PC-3 (cell line): ENCODE measurements at regions of chr19 and their contacts with region 1.

Region 1: DNA sequence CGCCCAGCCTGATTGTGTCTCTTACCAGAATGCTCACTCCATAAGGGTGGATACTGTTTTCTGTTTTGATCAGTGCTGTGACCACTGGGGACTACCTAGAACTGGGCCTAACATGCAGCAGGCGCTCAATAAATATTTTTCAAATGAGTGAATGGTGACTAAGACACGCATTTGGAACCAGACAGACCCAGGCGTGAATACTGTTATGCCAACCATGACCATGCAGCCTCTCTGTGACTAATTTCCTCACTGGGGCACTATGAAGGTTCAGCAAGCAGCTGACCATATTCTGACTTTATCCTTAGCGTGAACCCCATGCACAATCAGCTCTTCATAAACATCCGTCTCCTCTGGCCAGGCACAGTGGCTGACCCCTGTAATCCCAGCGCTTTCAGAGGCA is 13.0 kb upstream of the SPC24 start:
- DNase-seq: peak; percentile 99
- ATAC-seq: peak; percentile 97
- H3K4me3 ChIP-seq: no peak overlapping the region
- H3K27ac ChIP-seq: peak overlapping the region; percentile 76
- H3K4me1 ChIP-seq: peaks cover 18% of the 10 kb centered on the region
- H3K27me3 ChIP-seq: no peaks in the 10 kb centered on the region
- CTCF ChIP-seq: no peak

Region 2: GRCh38 chr19:11197264-11198174 is 29.0 kb after region 1 on chr19 and contains the start of gene KANK2:
- CTCF ChIA-PET with region 1: no interaction called
- POLR2A ChIA-PET with region 1: no interaction called
- intact Hi-C with region 1: loop called (anchors 2 kb)
- DNase-seq: peak; percentile 91
- ATAC-seq: peak; percentile 81
- H3K4me3 ChIP-seq: peak within 1 kb of the TSS; percentile 98
- H3K27ac ChIP-seq: peak within 1 kb of the TSS; percentile 12
- H3K4me1 ChIP-seq: peaks cover 18% of the 10 kb centered on the region
- H3K27me3 ChIP-seq: no peaks in the 10 kb centered on the region
- CTCF ChIP-seq: no peak
- total RNA-seq, gene KANK2: 96.6 and 98.4 TPM in 2 replicates